ENCODE measurements at regions of chr20 and their contacts with region 1.

Region 1: DNA sequence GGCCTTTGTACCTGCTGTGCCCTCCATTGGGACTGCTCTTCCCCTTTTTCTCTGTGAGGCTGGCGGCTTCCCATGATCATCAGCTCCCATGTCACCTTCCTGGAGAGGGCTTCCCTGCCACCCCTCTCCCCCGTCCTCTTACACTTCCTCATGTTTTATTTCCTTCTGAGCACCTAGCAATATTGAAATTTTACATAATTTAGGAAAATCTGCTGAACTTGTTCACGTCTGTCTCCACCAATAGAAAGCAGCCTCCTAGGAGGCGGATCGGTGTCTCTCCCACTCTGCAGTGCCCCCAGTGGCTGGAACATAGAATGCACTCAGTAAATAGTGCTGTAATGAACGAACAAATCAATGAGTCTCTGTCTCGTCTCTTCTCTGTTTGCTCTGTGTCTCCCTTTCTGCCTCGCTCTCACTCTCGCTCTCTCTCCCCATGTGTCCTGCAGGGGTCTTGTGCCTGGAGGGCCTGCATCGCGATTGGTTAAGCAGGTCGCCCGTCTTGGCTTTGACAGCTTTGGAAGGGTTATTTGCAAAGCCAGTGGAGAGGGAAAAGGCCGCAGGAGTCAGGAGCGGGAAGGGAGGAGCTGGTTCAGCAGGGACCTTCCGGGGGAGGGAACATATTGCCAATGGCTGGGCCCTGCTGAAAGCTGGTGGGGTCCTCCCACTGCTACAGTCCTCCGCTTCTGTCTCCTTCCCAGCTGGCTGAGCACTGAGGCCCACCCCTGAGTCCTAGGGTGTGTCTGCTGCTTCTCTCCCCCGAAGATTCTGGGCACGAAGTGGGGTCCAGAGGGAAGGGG is 12.1 kb upstream of the OCSTAMP start:
- DNase-seq: peak; percentile 54 to 91 (median 79)
- H3K4me3 ChIP-seq: peak overlapping the region; percentile 9 to 65 (median 48)
- H3K27ac ChIP-seq: peak overlapping the region; percentile 81 to 100 (median 96)
- H3K27me3 ChIP-seq: no peaks in the 10 kb centered on the region
- CTCF ChIP-seq: peak; percentile 77 to 96 (median 92)

Region 2: GRCh38 chr20:46607191-46607848 is 44.7 kb after region 1 on chr20:
- intact Hi-C with region 1: no loop called
- DNase-seq: no peak
- H3K4me3 ChIP-seq: no peak overlapping the region
- H3K27ac ChIP-seq: no peak overlapping the region
- H3K27me3 ChIP-seq: no peaks in the 10 kb centered on the region
- CTCF ChIP-seq: no peak

Region 3: DNA sequence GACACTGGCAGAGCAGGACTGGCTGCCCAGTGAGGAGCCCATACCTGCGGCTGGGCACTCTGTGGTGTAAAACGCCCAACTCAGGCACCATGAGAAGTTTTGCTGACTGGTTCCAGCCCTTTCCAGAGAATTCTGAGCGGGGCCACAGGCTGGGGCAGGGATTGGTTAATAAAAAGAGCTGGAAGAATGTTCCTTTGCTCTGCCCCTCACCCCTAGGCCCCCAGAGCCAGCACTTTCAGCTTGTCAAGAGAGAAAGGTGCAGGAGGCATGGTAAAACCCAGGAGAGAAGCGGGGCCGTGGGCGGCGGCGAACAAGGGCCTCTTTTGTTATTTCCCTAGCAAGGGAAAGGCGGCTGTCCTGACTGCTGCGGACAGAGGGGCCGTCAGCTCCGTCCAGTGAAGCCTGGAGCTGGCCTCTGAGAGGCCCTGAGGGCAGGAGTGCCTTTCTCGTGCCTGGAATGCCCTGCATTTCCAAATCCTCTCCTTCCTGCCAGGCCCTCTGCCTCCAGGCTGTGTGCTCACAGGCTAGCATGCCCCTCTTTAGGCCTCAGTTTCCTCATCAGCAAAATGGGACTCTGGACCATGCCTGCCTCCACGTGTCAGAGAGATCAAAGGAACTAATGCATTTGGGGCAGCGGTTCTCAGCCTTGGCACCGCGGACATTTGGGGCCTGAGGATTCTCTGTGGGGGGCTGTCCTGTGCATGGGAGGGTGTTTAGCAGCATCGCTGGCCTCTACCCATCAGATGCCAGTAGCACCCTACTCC is 75.7 kb after region 1 on chr20:
- intact Hi-C with region 1: loop called (anchors 5 kb)
- DNase-seq: peak in 8 of 10 donors; percentile 53 to 70 (median 60)
- H3K4me3 ChIP-seq: peak overlapping the region in 2 of 59 donors; percentile 4 to 20
- H3K27ac ChIP-seq: peak overlapping the region in 58 of 59 donors; percentile 16 to 96 (median 86)
- H3K27me3 ChIP-seq: no peaks in the 10 kb centered on the region
- CTCF ChIP-seq: peak in 2 of 56 donors; percentile 7 to 14

Region 4: GRCh38 chr20:46648903-46649649 is 86.5 kb after region 1 on chr20:
- intact Hi-C with region 1: loop called in 1 of 2 experiments (anchors 2 kb)
- DNase-seq: no peak
- H3K4me3 ChIP-seq: peak overlapping the region in 27 of 59 donors; percentile 1 to 76 (median 62)
- H3K27ac ChIP-seq: peak overlapping the region in 58 of 59 donors; percentile 3 to 99 (median 92)
- H3K27me3 ChIP-seq: peaks cover 0 to 4% (median 0%) of the 10 kb centered on the region in 45 donors
- CTCF ChIP-seq: peak in 1 of 56 donors; percentile 13

Region 5: GRCh38 chr20:46681032-46681854 is 118.7 kb after region 1 on chr20:
- intact Hi-C with region 1: loop called (anchors 2 kb)
- DNase-seq: peak in 9 of 10 donors; percentile 44 to 87 (median 67)
- H3K4me3 ChIP-seq: no peak overlapping the region
- H3K27ac ChIP-seq: peak overlapping the region in 2 of 59 donors; percentile 8 to 38
- H3K27me3 ChIP-seq: no peaks in the 10 kb centered on the region
- CTCF ChIP-seq: peak; percentile 73 to 91 (median 85)

Region 6: GRCh38 chr20:46689082-46689754 is 126.6 kb after region 1 on chr20 and contains the start of gene TP53RK:
- intact Hi-C with region 1: loop called in 1 of 2 experiments (anchors 2 kb)
- DNase-seq: peak; percentile 86 to 99 (median 96)
- H3K4me3 ChIP-seq: peak within 1 kb of the TSS; percentile 56 to 97 (median 87)
- H3K27ac ChIP-seq: peak within 1 kb of the TSS; percentile 54 to 98 (median 91)
- H3K27me3 ChIP-seq: no peaks in the 10 kb centered on the region
- CTCF ChIP-seq: peak in 46 of 56 donors; percentile 3 to 57 (median 36)
- total RNA-seq, gene TP53RK: 9.6 to 17.8 (median 13.5) TPM

Region 7: GRCh38 chr20:46725186-46726165 is 162.9 kb after region 1 on chr20:
- intact Hi-C with region 1: no loop called
- DNase-seq: no peak
- H3K4me3 ChIP-seq: no peak overlapping the region
- H3K27ac ChIP-seq: no peak overlapping the region
- H3K27me3 ChIP-seq: no peaks in the 10 kb centered on the region
- CTCF ChIP-seq: no peak

Region 8: GRCh38 chr20:46752728-46753127 is 190.2 kb after region 1 on chr20:
- intact Hi-C with region 1: loop called in 1 of 2 experiments (anchors 5 kb)
- DNase-seq: peak in 8 of 10 donors; percentile 8 to 77 (median 49)
- H3K4me3 ChIP-seq: peak overlapping the region in 8 of 59 donors; percentile 2 to 43 (median 16)
- H3K27ac ChIP-seq: no peak overlapping the region
- H3K27me3 ChIP-seq: peaks cover 0 to 7% (median 0%) of the 10 kb centered on the region in 45 donors
- CTCF ChIP-seq: peak; percentile 55 to 84 (median 73)